WTC11 (cell line): ENCODE measurements at regions of chr5 and their contacts with region 1.

Region 1: GRCh38 chr5:135729321-135729786 is 105.1 kb upstream of the SLC25A48 start:
- DNase-seq: no peak
- ATAC-seq: 0 out of 2 replicates have a peak, but pooled peaks have one; percentile 41
- H3K4me3 Mint-ChIP-seq: no peak overlapping the region
- H3K27ac Mint-ChIP-seq: no peak overlapping the region
- H3K4me1 Mint-ChIP-seq: peaks cover 11% of the 10 kb centered on the region
- H3K27me3 Mint-ChIP-seq: no peaks in the 10 kb centered on the region
- CTCF ChIP-seq: no peak

Region 2: DNA sequence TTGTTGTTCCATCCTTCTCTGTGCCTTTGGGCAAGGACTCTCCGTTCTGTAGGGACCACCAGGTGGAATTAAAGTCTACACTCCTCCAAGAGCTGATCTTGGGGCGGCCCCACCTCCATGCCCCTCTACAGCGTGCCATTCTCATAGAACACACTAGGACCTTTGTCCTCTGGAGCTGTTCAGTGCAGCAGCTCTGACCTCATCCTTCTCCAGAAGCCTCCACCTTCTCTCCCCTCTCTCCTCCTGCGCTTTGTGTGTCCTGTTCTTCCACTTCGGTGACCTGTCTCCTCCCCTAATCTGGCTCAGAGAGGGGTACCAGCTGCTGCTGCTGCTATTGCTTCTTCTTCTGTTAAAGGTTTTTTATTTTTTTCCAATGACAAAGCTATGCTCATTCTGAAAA is 328.5 kb before region 1 on chr5:
- CTCF ChIA-PET with region 1: no interaction called
- POLR2A ChIA-PET with region 1: no interaction called
- DNase-seq: no peak
- ATAC-seq: peak; percentile 1; the same call in 1 of the 2 replicates
- H3K4me3 Mint-ChIP-seq: peak overlapping the region; percentile 82
- H3K27ac Mint-ChIP-seq: no peak overlapping the region
- H3K4me1 Mint-ChIP-seq: peaks cover 52% of the 10 kb centered on the region
- H3K27me3 Mint-ChIP-seq: peaks cover 89% of the 10 kb centered on the region
- CTCF ChIP-seq: no peak

Region 3: GRCh38 chr5:135662683-135663082 is 66.7 kb before region 1 on chr5:
- CTCF ChIA-PET with region 1: interaction called, 10 read pairs
- POLR2A ChIA-PET with region 1: no interaction called
- DNase-seq: no peak
- ATAC-seq: peak; percentile 87
- H3K4me3 Mint-ChIP-seq: no peak overlapping the region
- H3K27ac Mint-ChIP-seq: no peak overlapping the region
- H3K4me1 Mint-ChIP-seq: peaks cover 9% of the 10 kb centered on the region
- H3K27me3 Mint-ChIP-seq: peaks cover 3% of the 10 kb centered on the region; the same call in 1 of the 2 replicates
- CTCF ChIP-seq: no peak